GM13976 (cell line): ENCODE measurements at regions of chr1 and their contacts with region 1.

Region 1: DNA sequence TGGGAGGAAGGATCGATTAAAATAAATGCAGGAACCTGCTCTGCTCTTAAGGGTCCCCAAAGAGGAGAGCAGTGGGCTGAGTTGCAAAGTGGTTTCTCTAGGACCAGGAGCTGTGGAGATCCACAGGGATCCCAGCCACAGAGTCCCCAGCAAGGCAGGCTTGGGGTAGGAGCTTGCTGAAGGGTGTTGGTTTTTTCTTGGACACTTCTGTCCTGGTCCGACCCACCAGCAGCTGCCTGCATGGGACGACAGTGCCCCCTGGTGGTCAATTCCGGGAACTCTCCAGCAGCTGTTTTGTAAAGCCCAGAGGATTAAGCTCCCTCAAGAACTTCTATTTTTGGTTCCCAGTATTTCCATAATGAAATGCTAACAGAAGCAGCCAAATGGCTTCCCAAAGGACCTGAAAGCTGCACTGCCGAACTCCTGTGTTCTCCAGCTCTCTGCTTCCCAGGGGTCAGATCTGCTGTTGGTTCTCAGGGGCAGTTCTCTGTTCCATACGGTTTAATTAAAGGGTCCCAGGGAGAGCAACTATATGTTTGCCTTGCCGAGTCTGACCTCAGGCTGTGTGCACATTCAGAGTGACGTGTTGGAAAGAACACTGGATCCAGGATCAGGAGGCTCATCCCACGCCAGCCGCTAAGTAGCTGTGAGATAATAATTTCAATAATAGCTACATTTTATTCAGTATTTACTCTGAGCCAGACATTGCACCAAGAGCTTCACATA is 23.2 kb downstream of the NENF start:
- DNase-seq: peak; percentile 82
- CTCF ChIP-seq: peak; percentile 89

Region 2: GRCh38 chr1:211680752-211681327 is 775.1 kb before region 1 on chr1:
- in situ Hi-C with region 1: loop called (anchors 10 kb)
- DNase-seq: peak; percentile 80
- CTCF ChIP-seq: peak; percentile 60

Region 3: GRCh38 chr1:212070720-212071302 is 385.2 kb before region 1 on chr1:
- in situ Hi-C with region 1: loop called (anchors 10 kb)
- DNase-seq: no peak
- CTCF ChIP-seq: peak; percentile 52

Region 4: GRCh38 chr1:212981571-212982328 is 525.8 kb after region 1 on chr1:
- in situ Hi-C with region 1: loop called (anchors 25 kb)
- DNase-seq: no peak
- CTCF ChIP-seq: no peak